Motor neuron (in vitro differentiated cells): ENCODE measurements at regions of chr11 and their contacts with region 1.

Region 1: GRCh38 chr11:82867495-82868082 is 32.6 kb downstream of the PRCP start:
- ATAC-seq: peak in 7 of 8 experiments; percentile 11 to 75 (median 63)
- H3K4me3 ChIP-seq: no peak overlapping the region
- H3K27ac ChIP-seq: no peak overlapping the region
- H3K4me1 ChIP-seq: peaks cover 3 to 7% of the 10 kb centered on the region in 2 donors

Region 2: DNA sequence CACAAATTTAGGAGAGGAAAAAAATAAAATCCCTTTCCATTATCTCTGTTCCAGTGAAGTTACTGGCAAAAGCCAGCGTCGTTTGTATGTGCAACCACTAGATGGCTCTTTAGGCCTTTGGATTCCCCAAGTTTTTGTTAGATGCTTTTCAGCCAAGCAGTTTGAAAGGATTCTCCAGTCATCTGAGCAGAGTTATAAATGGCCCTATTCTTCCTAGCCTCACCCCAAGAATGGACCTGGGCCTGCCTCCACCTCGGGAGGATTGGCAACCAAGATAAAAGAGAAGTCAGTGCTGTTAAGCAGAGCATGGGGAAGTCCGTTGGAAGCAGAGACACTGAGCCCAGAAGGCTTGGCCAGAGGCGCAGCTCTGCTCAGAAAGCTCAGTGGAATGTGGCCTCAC is 149.3 kb before region 1 on chr11:
- in situ Hi-C with region 1: loop called in 1 of 9 experiments (anchors 25 kb)
- ATAC-seq: peak; percentile 77 to 87 (median 83)
- H3K4me3 ChIP-seq: no peak overlapping the region
- H3K27ac ChIP-seq: no peak overlapping the region
- H3K4me1 ChIP-seq: peaks cover 6 to 7% of the 10 kb centered on the region in 2 donors

Region 3: DNA sequence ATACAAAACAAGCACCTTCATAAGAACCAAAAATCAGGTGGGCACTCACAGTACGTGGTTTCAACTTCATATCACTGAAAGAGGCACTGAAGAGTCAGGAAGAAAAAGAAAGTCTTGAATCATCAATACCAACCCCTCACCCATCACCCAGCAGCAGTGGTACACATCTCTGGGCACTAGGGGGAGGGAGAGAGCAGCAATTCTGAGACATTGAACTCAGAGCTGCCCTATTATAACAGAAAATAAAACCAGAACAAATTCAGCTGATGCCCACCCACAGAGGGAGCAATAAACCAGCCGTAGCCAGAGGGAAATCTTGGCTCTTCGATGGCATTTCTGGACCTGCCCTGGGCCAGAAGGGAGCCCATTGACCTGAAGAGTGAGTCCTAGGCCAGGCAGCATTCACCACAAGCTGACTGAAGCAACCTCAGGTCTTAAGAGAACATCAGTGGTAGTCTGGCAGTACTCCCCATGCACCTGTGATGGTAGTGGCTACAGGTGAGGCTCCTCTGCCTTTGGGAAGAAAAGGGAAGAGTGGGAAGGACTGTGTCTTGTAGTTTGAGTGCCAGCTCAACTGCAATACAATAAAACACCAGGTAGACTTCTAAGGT is 91.7 kb before region 1 on chr11:
- in situ Hi-C with region 1: no loop called
- ATAC-seq: peak in 3 of 8 experiments; percentile 94 to 96 (median 95)
- H3K4me3 ChIP-seq: no peak overlapping the region
- H3K27ac ChIP-seq: no peak overlapping the region
- H3K4me1 ChIP-seq: no peaks in the 10 kb centered on the region

Region 4: GRCh38 chr11:82927254-82927880 is 59.8 kb after region 1 on chr11:
- in situ Hi-C with region 1: no loop called
- ATAC-seq: peak in 6 of 8 experiments; percentile 39 to 75 (median 64)
- H3K4me3 ChIP-seq: no peak overlapping the region
- H3K27ac ChIP-seq: no peak overlapping the region
- H3K4me1 ChIP-seq: no peaks in the 10 kb centered on the region